H1 (cell line): ENCODE measurements at regions of chr15 and their contacts with region 1.

Region 1: DNA sequence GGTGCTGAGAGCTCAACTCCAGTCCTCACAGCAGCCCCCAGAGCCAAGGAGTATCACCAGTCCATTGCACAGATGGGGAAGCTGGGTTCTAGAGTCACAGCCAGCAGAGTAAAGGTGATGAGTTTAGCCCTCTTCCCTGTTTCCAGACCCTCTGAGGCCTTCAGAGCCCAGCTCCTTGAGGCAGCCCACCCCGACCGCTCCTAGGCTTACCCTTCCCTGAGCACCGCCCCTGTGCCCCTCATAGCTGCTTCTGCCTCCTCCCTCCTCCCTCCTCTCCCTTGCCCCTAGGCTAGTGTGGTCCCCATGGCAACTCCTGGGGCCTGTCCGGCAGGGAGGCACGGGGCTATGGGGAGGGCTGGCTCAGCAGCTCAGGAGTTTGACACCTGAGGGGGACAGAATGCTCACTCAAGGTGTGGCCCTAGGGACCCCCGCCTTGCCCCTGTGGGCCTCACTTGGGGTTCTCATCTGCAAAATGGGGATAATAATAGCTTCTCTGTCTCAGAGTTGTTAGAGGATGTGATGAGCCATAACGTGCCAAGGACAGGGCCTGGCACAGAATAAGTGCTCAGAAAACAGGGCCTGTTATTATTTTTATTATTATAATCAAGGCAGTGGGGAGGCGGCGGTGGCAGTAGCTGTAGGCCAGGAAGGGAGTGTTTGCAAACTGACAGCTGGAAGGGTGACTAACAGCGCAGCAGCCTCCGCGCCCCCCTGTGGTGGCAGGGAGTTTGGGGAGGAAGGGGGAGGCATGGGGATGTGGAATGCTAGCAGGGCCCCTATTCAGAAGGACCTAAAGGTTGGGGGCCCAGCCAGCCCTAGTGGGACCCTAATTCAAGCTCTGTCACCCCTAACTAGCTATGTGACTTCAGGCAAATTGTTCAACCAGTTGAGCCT is 11.5 kb downstream of the CSK start:
- DNase-seq: no peak
- H3K4me3 ChIP-seq: no peak overlapping the region
- H3K27ac ChIP-seq: no peak overlapping the region
- H3K4me1 ChIP-seq: peaks cover 2 to 19% (median 11%) of the 10 kb centered on the region in 4 experiments
- H3K27me3 ChIP-seq: no peaks in the 10 kb centered on the region
- CTCF ChIP-seq: peak in 2 of 3 experiments; percentile 7 to 16; a peak in 2 of 4 replicates
- EP300 ChIP-seq: no peak
- POLR2A ChIP-seq: no peak
- RAD21 ChIP-seq: no peak

Region 2: DNA sequence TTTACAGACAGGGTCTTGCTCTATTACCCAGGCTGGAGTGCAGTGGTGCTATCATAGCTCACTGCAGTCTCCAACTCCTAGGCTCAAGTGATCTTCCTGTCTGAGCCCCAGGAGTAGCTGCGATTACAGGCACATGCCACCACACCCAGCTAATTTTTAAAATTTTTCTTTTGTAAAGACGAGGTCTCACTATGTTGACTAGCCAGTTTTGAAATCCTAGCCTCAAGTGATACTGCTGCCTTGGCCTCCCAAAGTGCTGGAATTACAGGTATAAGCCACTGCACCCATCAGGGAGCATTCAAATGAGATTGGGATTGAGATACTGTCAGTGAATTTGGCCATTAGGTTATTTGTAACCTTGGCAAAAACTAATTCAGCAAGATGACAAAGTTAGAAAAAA is 119.3 kb before region 1 on chr15:
- CTCF ChIA-PET with region 1: no interaction called
- POLR2A ChIA-PET with region 1: no interaction called
- DNase-seq: no peak
- H3K4me3 ChIP-seq: no peak overlapping the region
- H3K27ac ChIP-seq: no peak overlapping the region
- H3K4me1 ChIP-seq: no peaks in the 10 kb centered on the region
- H3K27me3 ChIP-seq: no peaks in the 10 kb centered on the region
- CTCF ChIP-seq: no peak
- EP300 ChIP-seq: no peak
- POLR2A ChIP-seq: no peak
- RAD21 ChIP-seq: no peak

Region 3: DNA sequence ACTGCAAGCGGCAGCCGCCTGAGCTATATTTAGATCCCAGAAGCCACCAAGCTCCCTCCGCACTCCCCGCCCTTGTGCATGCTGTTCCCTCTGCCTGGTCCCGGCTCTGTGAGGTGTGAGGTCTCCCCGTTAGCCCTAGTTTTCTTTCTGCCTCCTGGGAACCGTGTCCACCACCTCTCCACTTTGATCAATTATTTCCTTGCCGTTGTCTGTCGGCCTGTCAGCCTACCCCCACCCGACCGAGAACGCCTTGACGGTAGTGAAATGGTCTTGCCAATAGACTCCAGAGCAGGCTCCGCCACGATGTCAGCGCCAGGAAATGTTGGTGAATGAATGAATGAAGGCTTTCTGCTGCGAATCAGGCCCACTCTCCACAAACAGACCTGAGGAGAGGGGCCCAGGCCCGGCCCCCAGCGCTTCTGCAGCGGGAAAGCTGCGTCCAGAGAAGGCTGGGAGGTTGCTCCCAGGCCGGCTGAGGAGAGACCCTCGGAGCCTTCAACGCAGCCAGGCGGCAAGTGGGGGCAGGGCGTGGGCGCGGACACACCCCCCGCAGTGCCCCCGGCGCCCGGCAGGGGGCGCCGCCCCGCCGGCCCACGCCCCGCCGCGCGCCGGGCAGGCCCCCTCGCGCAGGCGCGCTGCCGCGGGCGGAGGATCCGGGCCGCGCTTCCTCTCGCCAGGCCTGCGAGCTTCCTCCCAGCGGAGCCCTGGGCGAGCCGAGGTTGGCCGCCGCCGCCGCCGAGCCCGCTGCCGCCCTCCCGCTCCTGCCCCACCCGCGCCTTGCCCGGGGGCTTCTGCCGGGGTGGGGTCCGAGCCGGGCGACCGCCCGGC is 11.7 kb before region 1 on chr15 and contains the start of gene CSK:
- CTCF ChIA-PET with region 1: interaction called, 543 read pairs
- POLR2A ChIA-PET with region 1: interaction called, 20 read pairs
- DNase-seq: peak in 1 of 2 experiments; percentile 79
- H3K4me3 ChIP-seq: peak within 1 kb of the TSS; percentile 55 to 82 (median 60)
- H3K27ac ChIP-seq: no peak within 1 kb of the TSS
- H3K4me1 ChIP-seq: peaks cover 4 to 25% (median 20%) of the 10 kb centered on the region in 4 experiments
- H3K27me3 ChIP-seq: peaks cover 0 to 15% (median 11%) of the 10 kb centered on the region in 4 experiments; a peak in 6 of 7 replicates
- CTCF ChIP-seq: peak; percentile 44 to 72 (median 50)
- EP300 ChIP-seq: no peak
- POLR2A ChIP-seq: no peak
- RAD21 ChIP-seq: no peak; a peak in 1 of 4 replicates
- total RNA-seq, gene CSK: 50.2 and 51.7 TPM in 2 replicates